Right cardiac atrium (tissue), 5 donors: ENCODE measurements at regions of chr1 and their contacts with region 1.

Region 1: DNA sequence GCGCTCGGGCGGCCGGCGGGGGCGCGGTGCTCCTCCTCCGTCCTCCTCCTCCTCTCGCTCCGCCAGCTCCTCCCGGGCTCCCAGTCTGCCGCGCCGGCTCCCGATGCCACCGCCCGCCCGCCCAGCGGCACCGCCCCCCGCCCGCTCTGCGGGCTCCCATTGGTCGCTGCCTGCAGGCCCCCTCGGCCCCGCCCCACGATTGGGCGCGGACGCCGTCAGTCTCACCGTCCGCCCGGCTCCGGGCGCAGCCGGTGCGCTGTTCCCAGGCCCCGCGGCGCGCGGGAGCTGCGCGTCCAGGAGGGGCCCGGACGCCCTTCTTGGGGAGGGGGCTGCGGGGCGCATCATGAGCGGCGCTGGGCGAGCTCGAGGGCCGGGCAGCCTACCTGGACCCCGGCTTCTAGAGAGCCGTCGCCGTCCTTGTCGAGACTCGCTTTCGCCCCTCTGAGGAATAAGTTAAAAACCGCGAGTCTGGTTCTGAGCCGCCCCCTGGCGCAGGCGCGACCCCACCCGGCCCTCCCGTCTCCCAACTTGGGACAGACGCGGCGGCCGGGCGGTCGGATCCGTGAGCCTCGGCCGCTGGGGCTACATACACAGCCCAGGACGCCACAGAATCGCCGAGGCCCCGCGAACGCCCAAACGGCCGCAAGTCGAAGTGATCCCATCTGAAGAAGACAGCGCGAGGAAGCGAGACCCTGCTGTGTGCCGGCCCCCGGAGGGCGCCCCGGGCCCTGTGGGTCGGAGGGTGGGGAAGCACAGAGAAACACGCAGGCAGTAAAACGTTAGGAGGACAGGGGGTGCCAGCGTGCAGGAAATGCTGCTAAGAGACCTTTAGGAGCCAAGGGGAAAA is at the start of gene SIPA1L2:
- DNase-seq: peak; percentile 95 to 98 (median 98)
- ATAC-seq: peak; percentile 98 to 99
- H3K4me3 ChIP-seq: peak within 1 kb of the TSS; percentile 97
- H3K27ac ChIP-seq: peak within 1 kb of the TSS; percentile 94
- H3K4me1 ChIP-seq: peaks cover 3% of the 10 kb centered on the region
- H3K27me3 ChIP-seq: no peaks in the 10 kb centered on the region
- total RNA-seq, gene SIPA1L2: 90.2 to 117 (median 107) TPM

Region 2: GRCh38 chr1:231866392-231867331 is 763.6 kb before region 1 on chr1:
- intact Hi-C with region 1: loop called in 1 of 4 experiments (anchors 10 kb)
- DNase-seq: peak; percentile 50 to 73 (median 72)
- ATAC-seq: peak; percentile 32 to 54
- H3K4me3 ChIP-seq: no peak overlapping the region
- H3K27ac ChIP-seq: no peak overlapping the region
- H3K4me1 ChIP-seq: peaks cover 7% of the 10 kb centered on the region
- H3K27me3 ChIP-seq: no peaks in the 10 kb centered on the region

Region 3: DNA sequence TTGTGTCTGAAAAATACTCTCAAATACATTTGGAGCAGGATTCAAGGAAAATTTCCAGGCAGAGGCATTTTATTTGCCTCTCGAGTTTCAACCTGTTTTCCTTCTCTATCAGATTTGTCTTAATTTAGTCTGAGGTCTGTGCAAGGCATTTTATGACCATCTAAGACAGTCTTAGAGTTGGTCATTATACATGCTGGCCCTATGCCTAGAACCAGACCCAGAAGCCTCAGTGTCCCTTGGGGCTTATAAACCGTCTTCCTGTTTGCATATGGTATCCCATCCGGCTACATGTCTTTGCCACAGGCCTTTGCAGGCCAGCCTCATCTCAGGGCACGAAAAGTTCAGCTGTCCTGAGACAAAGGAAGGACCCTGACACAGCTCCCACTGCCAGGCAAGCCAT is 346.4 kb before region 1 on chr1:
- intact Hi-C with region 1: no loop called
- DNase-seq: no peak
- ATAC-seq: no peak
- H3K4me3 ChIP-seq: no peak overlapping the region
- H3K27ac ChIP-seq: no peak overlapping the region
- H3K4me1 ChIP-seq: peaks cover 6% of the 10 kb centered on the region
- H3K27me3 ChIP-seq: no peaks in the 10 kb centered on the region

Region 4: DNA sequence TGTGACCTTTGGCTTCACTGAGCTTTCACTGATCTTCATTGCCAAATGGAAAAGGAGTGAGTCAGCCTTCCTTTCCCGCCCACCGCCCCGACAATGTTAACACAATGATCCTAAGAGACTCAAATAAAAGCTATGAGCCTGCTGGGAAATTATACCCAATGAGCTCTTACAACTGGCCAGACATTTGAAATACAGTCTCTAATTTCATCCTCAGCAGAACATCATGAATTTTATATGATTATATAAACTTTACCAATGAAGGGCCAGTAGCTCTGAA is 252.8 kb before region 1 on chr1:
- intact Hi-C with region 1: loop called in 1 of 4 experiments (anchors 5 kb)
- DNase-seq: peak in 2 of 3 donors; percentile 56 to 66
- ATAC-seq: peak; percentile 45 to 82
- H3K4me3 ChIP-seq: no peak overlapping the region
- H3K27ac ChIP-seq: no peak overlapping the region
- H3K4me1 ChIP-seq: peaks cover 7% of the 10 kb centered on the region
- H3K27me3 ChIP-seq: no peaks in the 10 kb centered on the region

Region 5: GRCh38 chr1:232477728-232478127 is 152.5 kb before region 1 on chr1:
- intact Hi-C with region 1: loop called in 1 of 4 experiments (anchors 10 kb)
- DNase-seq: peak in 1 of 3 donors; percentile 31
- ATAC-seq: peak; percentile 78 to 80
- H3K4me3 ChIP-seq: no peak overlapping the region
- H3K27ac ChIP-seq: peak overlapping the region; percentile 13
- H3K4me1 ChIP-seq: peaks cover 2% of the 10 kb centered on the region
- H3K27me3 ChIP-seq: no peaks in the 10 kb centered on the region

Region 6: DNA sequence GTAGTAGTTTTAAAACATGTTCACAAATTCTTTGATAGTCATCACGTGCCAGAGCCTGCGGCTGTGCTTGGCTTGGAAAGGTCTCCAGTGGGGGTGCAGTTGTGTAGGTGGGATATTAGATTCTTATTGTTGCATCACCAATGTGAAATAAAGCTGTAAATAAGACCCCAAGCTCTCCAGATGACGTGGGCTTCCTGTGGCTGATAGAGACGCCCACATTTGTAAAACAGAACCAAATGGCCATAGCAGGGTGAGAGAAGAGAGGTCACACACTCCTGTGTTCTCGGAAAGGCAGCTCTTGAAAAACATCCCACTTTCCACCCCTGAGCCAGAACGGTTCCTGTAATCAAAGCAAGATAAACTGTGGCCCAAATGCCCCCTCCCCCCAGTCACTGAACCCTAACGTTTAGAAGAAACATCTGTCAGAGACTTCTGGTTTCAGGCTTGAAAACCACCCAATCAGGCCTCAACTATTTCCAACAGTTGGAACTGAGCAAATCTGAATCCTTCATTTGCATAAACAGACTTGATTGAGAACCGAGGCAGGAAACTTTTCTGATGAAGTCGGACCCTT is 313.5 kb after region 1 on chr1:
- intact Hi-C with region 1: loop called in 2 of 4 experiments (anchors 10 kb)
- DNase-seq: no peak
- ATAC-seq: no peak
- H3K4me3 ChIP-seq: no peak overlapping the region
- H3K27ac ChIP-seq: no peak overlapping the region
- H3K4me1 ChIP-seq: no peaks in the 10 kb centered on the region
- H3K27me3 ChIP-seq: no peaks in the 10 kb centered on the region

Region 7: DNA sequence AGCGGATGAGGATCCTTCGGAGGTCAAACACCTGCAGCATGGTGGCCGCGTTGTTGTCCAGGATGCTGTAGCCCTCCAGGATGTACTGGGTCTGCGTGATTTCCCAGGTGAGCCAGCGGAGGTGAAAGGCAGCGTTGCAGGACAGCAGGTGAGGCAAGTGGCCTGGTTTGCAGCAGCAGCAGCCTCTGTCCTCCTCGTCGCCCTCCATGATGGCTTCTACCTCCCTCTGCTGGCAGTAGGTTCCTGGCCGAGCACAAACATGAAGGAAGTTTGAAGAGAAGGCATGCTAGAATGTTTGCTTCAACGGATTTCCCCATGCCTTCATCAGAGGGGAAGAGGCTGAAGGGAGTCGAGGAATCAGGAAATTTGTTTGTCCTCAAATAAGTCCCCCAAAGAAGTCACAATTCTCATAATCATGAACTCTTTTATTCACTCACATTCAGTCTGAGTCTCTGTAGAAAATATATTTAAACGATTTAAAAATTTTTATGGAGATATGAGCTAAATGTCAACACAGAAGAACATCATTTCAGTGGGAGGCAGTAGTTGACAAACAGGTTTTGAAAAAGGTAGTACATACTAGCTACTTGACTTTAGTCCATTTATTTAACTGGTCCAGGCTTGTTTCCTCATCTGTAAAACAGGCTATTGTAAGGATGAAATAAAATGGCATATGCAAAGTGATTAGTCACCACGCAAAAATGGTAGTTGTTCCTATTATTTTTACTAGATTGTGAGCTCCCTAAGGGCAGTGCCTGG is 395.1 kb after region 1 on chr1:
- intact Hi-C with region 1: loop called in 3 of 4 experiments (anchors 5 to 10 kb)
- DNase-seq: peak in 2 of 3 donors; percentile 57 to 60
- ATAC-seq: peak; percentile 32 to 53
- H3K4me3 ChIP-seq: no peak overlapping the region
- H3K27ac ChIP-seq: no peak overlapping the region
- H3K4me1 ChIP-seq: no peaks in the 10 kb centered on the region
- H3K27me3 ChIP-seq: no peaks in the 10 kb centered on the region